PC-9 (cell line): ENCODE measurements at regions of chr6 and their contacts with region 1.

Region 1: GRCh38 chr6:33276864-33277662 is at the start of gene B3GALT4:
- DNase-seq: peak; percentile 92 to 93
- H3K4me3 ChIP-seq: peak within 1 kb of the TSS; percentile 70; the same call in 1 of the 2 replicates
- H3K27ac ChIP-seq: peak within 1 kb of the TSS; percentile 79
- H3K4me1 ChIP-seq: peaks cover 36% of the 10 kb centered on the region
- H3K27me3 ChIP-seq: no peaks in the 10 kb centered on the region
- CTCF ChIP-seq: peak; percentile 63
- total RNA-seq, gene B3GALT4: 10.3 and 12.8 TPM in 2 replicates

Region 2: DNA sequence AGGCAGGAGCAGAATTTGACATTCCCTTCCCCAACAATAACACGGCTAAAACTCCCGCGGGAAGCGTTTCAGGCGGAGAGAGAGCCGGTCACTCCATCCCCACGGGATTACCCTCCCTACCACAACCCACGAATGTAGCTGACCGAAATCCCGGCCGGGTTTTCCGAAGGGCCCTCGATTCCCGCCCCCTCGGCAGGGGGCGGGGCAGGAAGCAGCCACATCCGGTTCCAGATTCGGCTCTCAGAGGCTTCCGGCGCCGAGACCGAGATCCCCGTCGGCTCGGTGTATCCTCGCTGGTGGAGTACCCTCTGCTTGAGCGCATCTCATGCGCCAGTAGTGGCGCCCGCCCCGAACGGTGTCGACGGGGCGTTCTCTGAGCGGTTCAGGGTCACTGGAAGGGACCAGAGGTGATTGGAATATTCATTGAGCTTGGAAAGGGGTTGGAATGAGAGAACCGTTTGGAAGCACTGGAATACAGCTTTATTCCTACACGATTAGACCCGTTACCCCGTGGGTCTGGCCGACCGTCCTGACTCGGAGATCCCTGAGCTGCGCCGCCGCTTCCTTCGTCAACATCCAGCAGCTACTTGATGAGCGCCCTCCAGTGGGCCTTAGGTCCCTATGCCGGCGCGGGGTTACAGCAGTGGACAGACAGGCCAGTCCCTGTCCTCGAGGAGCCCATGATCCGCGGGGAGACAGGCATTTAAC is 22.3 kb after region 1 on chr6:
- CTCF ChIA-PET with region 1: interaction called, 8 read pairs
- POLR2A ChIA-PET with region 1: interaction called, 5 read pairs
- intact Hi-C with region 1: loop called (anchors 2 kb)
- DNase-seq: peak; percentile 72 to 87
- H3K4me3 ChIP-seq: peak overlapping the region; percentile 75
- H3K27ac ChIP-seq: peak overlapping the region; percentile 88
- H3K4me1 ChIP-seq: peaks cover 23% of the 10 kb centered on the region
- H3K27me3 ChIP-seq: no peaks in the 10 kb centered on the region
- CTCF ChIP-seq: peak; percentile 78

Region 3: GRCh38 chr6:33344701-33345697 is 67.9 kb after region 1 on chr6:
- CTCF ChIA-PET with region 1: no interaction called
- POLR2A ChIA-PET with region 1: no interaction called
- intact Hi-C with region 1: loop called (anchors 1 kb)
- DNase-seq: peak; percentile 55 to 84
- H3K4me3 ChIP-seq: no peak overlapping the region
- H3K27ac ChIP-seq: peak overlapping the region; percentile 24; the same call in 1 of the 2 replicates
- H3K4me1 ChIP-seq: peaks cover 9% of the 10 kb centered on the region
- H3K27me3 ChIP-seq: no peaks in the 10 kb centered on the region
- CTCF ChIP-seq: peak; percentile 80